Activated CD4-positive, alpha-beta T cell treated with anti-CD3 and anti-CD28 coated beads for 36 hours (primary cell): ENCODE measurements at regions of chr6 and their contacts with region 1.

Region 1: GRCh38 chr6:16183187-16183664 is 54.3 kb downstream of the MYLIP start:
- DNase-seq: no peak
- ATAC-seq: peak; percentile 48
- H3K4me3 Mint-ChIP-seq: no peak overlapping the region
- H3K27ac Mint-ChIP-seq: no peak overlapping the region
- H3K4me1 Mint-ChIP-seq: peaks cover 21% of the 10 kb centered on the region
- H3K27me3 Mint-ChIP-seq: peaks cover under 1% of the 10 kb centered on the region

Region 2: GRCh38 chr6:15287670-15288375 is 895.4 kb before region 1 on chr6:
- CTCF ChIA-PET with region 1: no interaction called
- POLR2A ChIA-PET with region 1: no interaction called
- intact Hi-C with region 1: no loop called
- DNase-seq: no peak
- ATAC-seq: peak; percentile 42
- H3K4me3 Mint-ChIP-seq: no peak overlapping the region
- H3K27ac Mint-ChIP-seq: no peak overlapping the region
- H3K4me1 Mint-ChIP-seq: peaks cover 59% of the 10 kb centered on the region
- H3K27me3 Mint-ChIP-seq: no peaks in the 10 kb centered on the region

Region 3: GRCh38 chr6:15691250-15691869 is 491.9 kb before region 1 on chr6:
- CTCF ChIA-PET with region 1: interaction called, 25 read pairs
- POLR2A ChIA-PET with region 1: no interaction called
- intact Hi-C with region 1: loop called (anchors 1 kb)
- DNase-seq: peak; percentile 91
- ATAC-seq: peak; percentile 99
- H3K4me3 Mint-ChIP-seq: no peak overlapping the region
- H3K27ac Mint-ChIP-seq: peak overlapping the region; percentile 61
- H3K4me1 Mint-ChIP-seq: peaks cover 14% of the 10 kb centered on the region
- H3K27me3 Mint-ChIP-seq: peaks cover 7% of the 10 kb centered on the region

Region 4: DNA sequence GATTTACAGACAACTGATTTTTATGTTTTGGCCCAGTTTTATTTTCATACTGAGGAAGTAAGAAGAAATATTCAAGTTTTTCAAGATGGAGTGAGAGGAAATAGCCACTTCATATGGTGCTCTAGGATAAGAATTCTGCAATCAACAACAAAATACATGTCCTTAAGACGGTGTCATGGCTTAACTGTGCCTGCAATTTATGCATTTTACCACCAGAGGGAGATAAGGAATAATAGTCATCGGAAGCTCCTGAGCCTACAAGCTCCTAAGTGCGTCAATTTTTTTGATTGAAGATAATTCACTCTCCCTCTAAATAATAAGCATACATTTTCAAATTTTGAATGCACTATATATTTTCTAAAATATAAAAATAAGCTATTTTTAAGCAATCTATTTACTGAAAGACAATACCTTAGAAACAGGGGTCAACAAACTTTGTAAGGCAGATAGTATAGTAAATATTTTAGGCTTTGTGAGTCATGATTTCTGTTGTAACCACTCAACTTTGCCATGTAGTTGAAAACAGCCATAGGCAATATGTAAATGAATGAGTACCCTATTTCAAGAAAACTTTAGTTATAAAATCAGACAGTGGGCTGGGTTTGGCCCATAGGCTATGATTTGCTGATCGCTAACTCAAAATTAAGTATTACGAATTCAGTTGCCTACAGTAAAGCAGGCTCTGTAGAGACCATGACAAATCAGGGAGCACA is 289.5 kb before region 1 on chr6:
- CTCF ChIA-PET with region 1: interaction called, 9 read pairs
- POLR2A ChIA-PET with region 1: no interaction called
- intact Hi-C with region 1: loop called in 1 of 2 experiments (anchors 5 kb)
- DNase-seq: no peak
- ATAC-seq: no peak
- H3K4me3 Mint-ChIP-seq: no peak overlapping the region
- H3K27ac Mint-ChIP-seq: no peak overlapping the region
- H3K4me1 Mint-ChIP-seq: peaks cover 8% of the 10 kb centered on the region
- H3K27me3 Mint-ChIP-seq: peaks cover 2% of the 10 kb centered on the region

Region 5: DNA sequence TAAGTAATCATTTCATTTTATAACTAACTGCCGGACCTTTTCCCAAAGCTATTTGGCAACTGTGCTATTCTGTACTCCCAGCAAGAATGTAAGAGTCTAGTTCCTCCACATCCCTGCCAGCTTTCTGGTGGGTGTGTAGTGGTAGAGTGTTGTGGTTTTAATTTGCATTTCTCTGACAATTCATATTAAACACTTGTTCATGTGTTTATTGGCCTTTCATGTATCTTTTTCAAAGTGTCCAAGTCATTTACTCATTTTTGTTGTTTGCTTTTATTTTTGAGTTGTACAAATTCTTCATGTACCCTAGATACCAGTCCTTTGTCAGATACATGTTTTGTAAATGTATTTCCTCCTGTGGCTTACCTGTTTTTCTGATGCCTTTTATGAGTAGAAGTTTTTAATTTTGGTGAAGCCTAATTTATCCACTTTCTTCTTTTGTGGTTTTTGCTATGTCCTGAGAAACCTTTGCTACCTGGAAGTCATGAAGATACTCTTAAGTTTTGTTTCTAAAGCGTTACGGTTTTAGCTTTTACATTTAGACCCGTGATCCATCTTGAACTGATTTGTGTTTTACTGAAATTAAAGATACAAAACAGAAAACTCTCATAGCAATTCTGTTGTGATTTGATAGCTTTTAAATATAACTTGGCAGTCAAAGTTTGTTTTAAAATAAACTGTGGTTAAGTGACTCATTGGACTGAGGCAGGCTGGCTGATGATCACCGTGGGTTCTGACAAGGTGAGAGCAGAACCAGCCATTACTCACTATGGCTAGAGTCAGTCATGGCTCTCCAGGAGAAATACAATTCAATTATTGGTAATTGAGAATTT is 46.4 kb before region 1 on chr6:
- CTCF ChIA-PET with region 1: interaction called, 13 read pairs
- POLR2A ChIA-PET with region 1: interaction called, 5 read pairs
- intact Hi-C with region 1: loop called in 1 of 2 experiments (anchors 1 kb)
- DNase-seq: peak; percentile 75
- ATAC-seq: peak; percentile 89
- H3K4me3 Mint-ChIP-seq: peak overlapping the region; percentile 56
- H3K27ac Mint-ChIP-seq: peak overlapping the region; percentile 86
- H3K4me1 Mint-ChIP-seq: peaks cover 79% of the 10 kb centered on the region
- H3K27me3 Mint-ChIP-seq: no peaks in the 10 kb centered on the region

Region 6: GRCh38 chr6:16200321-16200883 is 17.2 kb after region 1 on chr6:
- CTCF ChIA-PET with region 1: interaction called, 27 read pairs
- POLR2A ChIA-PET with region 1: no interaction called
- intact Hi-C with region 1: no loop called
- DNase-seq: no peak
- ATAC-seq: no peak
- H3K4me3 Mint-ChIP-seq: no peak overlapping the region
- H3K27ac Mint-ChIP-seq: no peak overlapping the region
- H3K4me1 Mint-ChIP-seq: no peaks in the 10 kb centered on the region
- H3K27me3 Mint-ChIP-seq: peaks cover 6% of the 10 kb centered on the region

Region 7: GRCh38 chr6:16403831-16404230 is 220.6 kb after region 1 on chr6:
- CTCF ChIA-PET with region 1: no interaction called
- POLR2A ChIA-PET with region 1: no interaction called
- intact Hi-C with region 1: no loop called
- DNase-seq: no peak
- ATAC-seq: peak; percentile 55
- H3K4me3 Mint-ChIP-seq: no peak overlapping the region
- H3K27ac Mint-ChIP-seq: peak overlapping the region; percentile 3
- H3K4me1 Mint-ChIP-seq: peaks cover 17% of the 10 kb centered on the region
- H3K27me3 Mint-ChIP-seq: no peaks in the 10 kb centered on the region

Region 8: GRCh38 chr6:16591396-16592222 is 408.4 kb after region 1 on chr6:
- CTCF ChIA-PET with region 1: no interaction called
- POLR2A ChIA-PET with region 1: no interaction called
- intact Hi-C with region 1: no loop called
- DNase-seq: peak; percentile 61
- ATAC-seq: peak; percentile 87
- H3K4me3 Mint-ChIP-seq: no peak overlapping the region
- H3K27ac Mint-ChIP-seq: peak overlapping the region; percentile 78
- H3K4me1 Mint-ChIP-seq: peaks cover 19% of the 10 kb centered on the region
- H3K27me3 Mint-ChIP-seq: no peaks in the 10 kb centered on the region